ENCODE measurements at regions of chr17 and their contacts with region 1.

Region 1: DNA sequence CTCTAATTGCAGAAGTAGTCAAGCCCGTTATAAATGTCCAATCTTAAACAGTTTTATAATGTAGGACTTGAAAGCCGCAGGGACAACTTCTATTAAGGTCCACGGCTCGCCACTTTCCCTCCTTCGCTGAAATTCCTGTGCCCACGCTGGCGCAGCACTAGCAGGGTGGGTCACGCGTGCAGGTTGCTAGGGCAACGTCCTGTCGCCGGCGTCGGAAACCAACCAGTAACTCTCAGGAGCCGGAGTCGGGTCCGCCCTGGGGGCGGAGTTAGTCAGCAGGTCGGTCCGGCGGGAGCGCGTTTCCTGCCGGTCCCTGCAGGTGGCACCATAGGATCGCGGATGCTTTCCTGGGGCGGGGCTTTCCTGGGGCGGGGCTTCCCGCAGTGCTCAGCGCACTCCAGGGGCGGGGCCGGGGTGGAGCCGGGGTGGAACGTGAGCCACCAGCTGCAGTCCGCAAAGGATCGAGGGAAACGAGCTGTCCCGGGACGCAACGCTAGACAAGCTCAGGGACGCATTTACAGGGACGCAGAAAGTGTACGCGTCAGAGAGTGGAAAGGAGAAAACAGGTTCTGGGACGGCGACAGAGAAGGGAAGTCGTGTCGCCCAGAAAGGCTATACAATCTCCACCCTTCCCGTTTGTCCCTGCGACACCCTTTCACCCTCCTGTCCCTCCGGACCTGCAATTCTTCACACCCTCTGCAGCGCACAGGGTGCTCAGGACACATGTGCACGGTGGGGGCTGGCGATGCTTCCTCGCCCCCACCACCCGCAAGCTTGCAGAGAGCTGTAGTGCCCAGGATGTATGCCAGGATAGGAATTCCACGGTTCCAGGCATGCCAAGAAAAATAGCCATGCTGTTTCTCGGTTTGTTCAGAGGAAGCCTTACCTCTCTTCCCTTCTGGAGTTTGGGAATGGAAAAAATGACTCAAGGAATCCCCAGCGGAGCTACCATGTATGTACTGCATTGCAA is 12.4 kb downstream of the COPZ2 start:
- DNase-seq: peak; percentile 94
- H3K4me3 Mint-ChIP-seq: peak overlapping the region; percentile 86
- H3K27ac Mint-ChIP-seq: peak overlapping the region; percentile 75
- H3K4me1 Mint-ChIP-seq: peaks cover 27% of the 10 kb centered on the region
- H3K27me3 Mint-ChIP-seq: peaks cover 29% of the 10 kb centered on the region

Region 2: DNA sequence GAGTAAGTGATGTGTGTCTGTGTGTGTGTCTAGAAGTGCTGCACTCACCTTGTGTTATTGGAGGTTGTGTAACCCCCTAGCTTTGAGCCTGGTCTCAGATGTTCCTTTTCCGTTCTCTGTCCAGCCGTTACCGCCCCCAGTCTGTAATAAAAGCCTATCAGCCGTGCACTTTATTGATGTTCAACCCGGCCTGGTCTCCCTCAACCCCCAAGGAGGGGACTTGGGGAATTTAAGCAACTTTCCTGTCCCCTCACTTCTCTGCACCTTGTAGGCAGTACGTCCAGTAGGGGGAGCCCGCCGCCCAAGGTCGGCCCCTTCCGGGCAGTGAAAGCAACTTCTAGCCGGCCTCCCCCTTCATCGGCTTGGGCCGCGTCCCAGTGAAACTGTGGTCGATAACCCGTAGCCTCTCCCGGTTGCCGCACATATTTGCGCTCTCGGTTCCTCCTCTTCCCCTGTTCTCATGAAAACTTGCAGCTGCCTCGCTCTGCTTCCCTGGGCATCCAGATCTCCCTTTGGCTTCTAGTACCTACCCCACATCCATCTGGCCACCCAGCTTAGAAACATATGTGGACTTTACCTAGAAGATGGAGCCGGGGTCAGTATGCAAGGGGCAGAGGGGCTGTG is 76.0 kb before region 1 on chr17:
- intact Hi-C with region 1: loop called (anchors 2 kb)
- DNase-seq: peak; percentile 76
- H3K4me3 Mint-ChIP-seq: peak overlapping the region; percentile 70
- H3K27ac Mint-ChIP-seq: peak overlapping the region; percentile 76
- H3K4me1 Mint-ChIP-seq: peaks cover 41% of the 10 kb centered on the region
- H3K27me3 Mint-ChIP-seq: no peaks in the 10 kb centered on the region

Region 3: GRCh38 chr17:48011405-48012150 is 13.6 kb before region 1 on chr17:
- intact Hi-C with region 1: loop called (anchors 1 kb)
- DNase-seq: peak; percentile 44
- H3K4me3 Mint-ChIP-seq: peak overlapping the region; percentile 84
- H3K27ac Mint-ChIP-seq: peak overlapping the region; percentile 37
- H3K4me1 Mint-ChIP-seq: peaks cover 6% of the 10 kb centered on the region
- H3K27me3 Mint-ChIP-seq: peaks cover 24% of the 10 kb centered on the region

Region 4: GRCh38 chr17:48074315-48075081 is 49.3 kb after region 1 on chr17:
- intact Hi-C with region 1: loop called (anchors 1 kb)
- DNase-seq: peak; percentile 59
- H3K4me3 Mint-ChIP-seq: no peak overlapping the region
- H3K27ac Mint-ChIP-seq: no peak overlapping the region
- H3K4me1 Mint-ChIP-seq: no peaks in the 10 kb centered on the region
- H3K27me3 Mint-ChIP-seq: no peaks in the 10 kb centered on the region

Region 5: DNA sequence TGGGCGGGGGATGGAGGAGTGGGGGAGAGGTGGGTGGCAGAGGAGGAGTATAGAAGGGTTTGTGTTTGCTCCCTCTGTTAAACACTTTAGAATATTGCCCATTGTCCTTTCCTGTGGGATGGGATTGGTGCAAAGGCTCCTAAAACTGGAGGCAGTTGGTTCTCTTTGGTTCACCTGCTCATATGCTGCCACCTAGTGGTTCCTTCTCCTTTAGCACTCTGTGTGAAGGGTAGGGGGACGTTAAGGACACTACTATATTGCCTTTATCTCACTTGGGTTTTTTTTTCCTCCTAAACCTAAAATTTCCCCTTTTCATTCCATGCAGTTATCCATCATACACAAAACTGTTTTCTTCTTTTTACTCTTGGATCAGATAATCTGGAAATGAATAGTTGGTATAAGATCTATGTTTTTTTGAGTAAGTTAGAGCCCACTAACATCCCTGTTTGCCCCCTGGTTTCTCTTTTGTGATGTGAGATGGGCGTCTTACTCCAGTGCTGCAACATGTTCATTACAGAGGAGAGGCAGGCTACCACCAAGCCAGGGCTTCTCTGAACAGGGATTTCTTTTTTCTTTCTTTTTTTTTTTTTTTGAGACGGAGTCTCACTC is 106.1 kb after region 1 on chr17:
- intact Hi-C with region 1: loop called (anchors 1 kb)
- DNase-seq: peak; percentile 41
- H3K4me3 Mint-ChIP-seq: no peak overlapping the region
- H3K27ac Mint-ChIP-seq: no peak overlapping the region
- H3K4me1 Mint-ChIP-seq: peaks cover 11% of the 10 kb centered on the region
- H3K27me3 Mint-ChIP-seq: no peaks in the 10 kb centered on the region

Region 6: GRCh38 chr17:48618256-48618897 is 593.2 kb after region 1 on chr17:
- intact Hi-C with region 1: loop called (anchors 2 kb)
- DNase-seq: peak; percentile 75
- H3K4me3 Mint-ChIP-seq: no peak overlapping the region
- H3K27ac Mint-ChIP-seq: peak overlapping the region; percentile 62
- H3K4me1 Mint-ChIP-seq: peaks cover 28% of the 10 kb centered on the region
- H3K27me3 Mint-ChIP-seq: peaks cover 93% of the 10 kb centered on the region

Measured in activated T-helper 1 cell treated with anti-CD3 and anti-CD28 coated beads, Interleukin-12 subunit alpha, Interleukin-12 subunit beta, Interleukin-2, Interleukin-4 antibody, amounts not matched to agents 30 ng/mL and 10 ng/mL and 1 ng/mL, durations not matched to agents 14 hours and 24 hours and 36 hours (primary cell).